MCF 10A (cell line): ENCODE measurements at regions of chr1 and their contacts with region 1.

Region 1: DNA sequence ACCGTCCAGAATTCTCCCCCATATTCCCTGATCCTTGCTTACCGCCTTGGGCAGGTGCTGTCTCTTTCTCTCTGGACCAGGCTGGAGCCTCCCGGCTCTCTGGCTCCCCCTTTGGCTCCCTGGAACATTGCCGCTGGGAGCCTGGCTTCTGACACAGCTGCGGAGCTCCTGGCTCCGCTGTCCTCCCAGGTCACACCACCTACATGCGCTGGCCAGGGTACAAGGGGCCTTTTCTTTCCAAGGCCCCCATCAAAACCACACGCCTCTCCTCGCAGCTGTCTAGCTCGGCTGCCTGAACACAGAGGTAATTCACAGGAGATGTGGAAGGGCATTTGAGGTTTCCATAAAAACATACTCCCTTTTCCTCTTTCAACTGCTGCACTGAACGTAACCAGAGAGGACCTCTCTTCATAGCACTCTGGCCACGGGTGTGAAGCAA is 7.5 kb upstream of the ZNF648 start:
- DNase-seq: peak; percentile 81
- H3K4me3 Mint-ChIP-seq: no peak overlapping the region
- H3K27ac Mint-ChIP-seq: no peak overlapping the region
- H3K4me1 Mint-ChIP-seq: no peaks in the 10 kb centered on the region
- H3K27me3 Mint-ChIP-seq: no peaks in the 10 kb centered on the region
- CTCF ChIP-seq: peak; percentile 94

Region 2: GRCh38 chr1:181485287-181486097 is 583.6 kb before region 1 on chr1:
- CTCF ChIA-PET with region 1: interaction called, 11 read pairs
- POLR2A ChIA-PET with region 1: no interaction called
- intact Hi-C with region 1: no loop called
- DNase-seq: no peak
- H3K4me3 Mint-ChIP-seq: no peak overlapping the region
- H3K27ac Mint-ChIP-seq: no peak overlapping the region
- H3K4me1 Mint-ChIP-seq: peaks cover 14% of the 10 kb centered on the region
- H3K27me3 Mint-ChIP-seq: peaks cover 55% of the 10 kb centered on the region
- CTCF ChIP-seq: no peak

Region 3: DNA sequence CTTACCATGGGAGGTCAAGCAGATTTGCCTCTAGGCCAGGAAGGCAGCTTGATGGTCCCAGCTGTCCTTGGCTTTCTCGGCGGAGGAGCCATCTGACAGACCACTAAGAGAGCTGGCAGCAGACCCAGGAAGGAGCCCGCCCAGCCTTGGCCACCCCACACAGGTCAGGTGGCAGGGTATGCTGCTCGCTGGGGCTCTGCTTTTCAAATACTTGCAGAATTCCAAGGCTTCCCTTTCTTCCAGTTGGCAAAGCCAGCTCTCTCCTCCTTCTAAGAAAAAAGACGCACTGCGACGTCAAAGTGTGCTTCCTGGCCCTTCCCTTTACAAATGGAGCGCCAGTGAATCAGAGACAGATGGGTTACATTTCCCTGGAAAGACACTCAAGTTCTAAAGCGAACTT is 356.3 kb before region 1 on chr1:
- CTCF ChIA-PET with region 1: no interaction called
- POLR2A ChIA-PET with region 1: no interaction called
- intact Hi-C with region 1: no loop called
- DNase-seq: no peak
- H3K4me3 Mint-ChIP-seq: no peak overlapping the region
- H3K27ac Mint-ChIP-seq: no peak overlapping the region
- H3K4me1 Mint-ChIP-seq: peaks cover 6% of the 10 kb centered on the region
- H3K27me3 Mint-ChIP-seq: peaks cover 42% of the 10 kb centered on the region
- CTCF ChIP-seq: no peak

Region 4: DNA sequence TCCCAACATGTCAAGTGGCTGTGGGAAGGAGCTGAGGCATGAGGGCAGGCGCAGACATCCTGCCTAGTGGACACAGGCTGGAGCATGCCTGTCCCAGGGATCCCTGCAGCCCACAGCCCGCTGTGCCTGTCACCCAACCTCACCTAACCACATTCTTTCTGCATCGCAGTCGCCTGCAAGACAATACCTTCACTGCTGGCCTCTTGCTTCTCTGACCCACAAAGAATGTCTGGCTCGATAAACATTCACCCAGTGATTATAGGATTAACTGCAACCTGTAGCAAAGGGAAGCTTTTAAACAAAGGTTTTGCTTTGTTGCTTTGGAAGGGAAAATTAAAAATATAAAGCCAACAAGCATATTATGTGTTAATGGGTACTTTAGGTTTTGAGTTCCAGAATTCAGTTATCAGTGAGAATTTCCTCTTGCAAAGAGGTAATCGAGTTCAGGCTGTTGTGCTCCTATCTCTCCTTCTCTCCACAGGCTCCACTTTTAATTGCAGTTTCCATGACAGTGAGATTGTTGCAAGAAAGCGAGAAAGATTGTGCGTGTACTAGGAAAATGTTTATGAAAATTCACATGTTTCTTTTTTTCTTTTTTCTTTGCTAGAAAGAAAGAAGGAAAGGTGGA is 32.5 kb after region 1 on chr1:
- CTCF ChIA-PET with region 1: no interaction called
- POLR2A ChIA-PET with region 1: no interaction called
- intact Hi-C with region 1: no loop called
- DNase-seq: no peak
- H3K4me3 Mint-ChIP-seq: no peak overlapping the region
- H3K27ac Mint-ChIP-seq: no peak overlapping the region
- H3K4me1 Mint-ChIP-seq: no peaks in the 10 kb centered on the region
- H3K27me3 Mint-ChIP-seq: no peaks in the 10 kb centered on the region
- CTCF ChIP-seq: no peak